Caco-2 (cell line): ENCODE measurements at regions of chr2 and their contacts with region 1.

Region 1: DNA sequence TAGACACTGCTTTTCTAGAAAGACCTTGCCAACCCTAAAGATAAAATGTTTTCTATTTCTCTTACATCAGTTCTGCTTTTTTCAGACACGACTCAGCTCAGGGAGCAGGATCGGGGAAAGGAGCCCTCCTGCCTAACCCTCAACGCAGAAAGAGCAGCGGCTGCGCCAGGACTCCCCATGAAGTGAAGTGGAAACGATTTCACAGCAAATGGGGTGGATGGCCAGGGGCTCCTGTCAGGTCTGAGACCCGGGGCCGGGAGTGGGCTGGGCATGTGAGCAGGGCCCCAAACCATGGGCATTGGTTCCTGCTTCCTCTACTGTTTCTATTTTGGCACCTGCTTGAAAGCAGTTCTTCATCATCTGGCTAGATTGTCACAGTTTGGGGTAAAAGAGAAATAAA is 89.4 kb upstream of the PXDN start:
- DNase-seq: no peak
- H3K4me3 ChIP-seq: no peak overlapping the region
- H3K4me3 Mint-ChIP-seq: no peak overlapping the region
- H3K27ac Mint-ChIP-seq: no peak overlapping the region
- H3K4me1 ChIP-seq: no peaks in the 10 kb centered on the region
- H3K4me1 Mint-ChIP-seq: no peaks in the 10 kb centered on the region
- H3K27me3 ChIP-seq: no peaks in the 10 kb centered on the region
- H3K27me3 Mint-ChIP-seq: peaks cover 15% of the 10 kb centered on the region
- CTCF ChIP-seq: no peak

Region 2: GRCh38 chr2:1859671-1860450 is 26.1 kb after region 1 on chr2:
- CTCF ChIA-PET with region 1: no interaction called
- POLR2A ChIA-PET with region 1: no interaction called
- intact Hi-C with region 1: loop called (anchors 1 kb)
- DNase-seq: no peak
- H3K4me3 ChIP-seq: no peak overlapping the region
- H3K4me3 Mint-ChIP-seq: no peak overlapping the region
- H3K27ac Mint-ChIP-seq: no peak overlapping the region
- H3K4me1 ChIP-seq: no peaks in the 10 kb centered on the region
- H3K4me1 Mint-ChIP-seq: no peaks in the 10 kb centered on the region
- H3K27me3 ChIP-seq: no peaks in the 10 kb centered on the region
- H3K27me3 Mint-ChIP-seq: peaks cover 35% of the 10 kb centered on the region
- CTCF ChIP-seq: no peak